Sigmoid colon (tissue), 7 donors: ENCODE measurements at regions of chr9 and their contacts with region 1.

Region 1: DNA sequence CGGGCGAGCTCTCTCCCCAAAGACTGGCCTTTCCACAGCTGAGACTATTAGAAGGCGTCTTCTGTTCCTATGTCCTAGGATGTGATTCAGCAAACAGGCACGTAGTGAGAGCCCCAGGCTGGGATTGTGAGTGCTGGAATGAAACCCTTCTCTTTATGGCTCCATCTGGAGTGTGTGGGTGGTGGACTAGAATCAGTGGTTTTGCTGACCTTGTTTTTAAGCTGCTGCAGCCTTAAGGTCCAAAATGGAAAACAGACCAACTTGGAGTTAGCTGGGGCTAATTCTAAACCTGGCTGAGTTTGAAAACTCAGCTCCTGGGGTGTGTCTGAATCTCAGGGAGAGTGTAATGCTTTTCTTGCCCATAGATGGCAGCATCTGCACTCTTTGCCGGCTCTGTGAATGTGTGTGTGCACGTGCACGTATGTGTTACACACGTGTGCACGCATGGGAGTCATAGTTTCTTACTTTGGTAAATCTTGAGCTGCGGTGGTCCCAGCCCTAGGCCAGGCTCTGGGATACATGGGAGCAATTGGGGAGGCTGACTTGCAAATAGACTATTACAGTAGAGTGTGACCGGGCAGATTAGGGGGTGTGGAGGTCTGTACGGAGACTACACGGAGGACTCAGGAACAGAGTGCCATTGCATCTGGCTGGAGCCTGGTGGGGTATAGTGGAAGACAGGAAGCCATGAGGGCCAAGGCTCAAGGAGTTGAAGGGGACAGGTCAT is 10.7 kb downstream of the GSN start:
- DNase-seq: peak; percentile 94
- H3K4me3 ChIP-seq: peak overlapping the region in 1 of 4 donors; percentile 7
- H3K27ac ChIP-seq: peak overlapping the region; percentile 94 to 99 (median 97)
- H3K4me1 ChIP-seq: peaks cover 0 to 100% (median 97%) of the 10 kb centered on the region in 4 donors
- H3K27me3 ChIP-seq: no peaks in the 10 kb centered on the region
- CTCF ChIP-seq: peak in 3 of 4 experiments; percentile 79 to 94 (median 83)
- EP300 ChIP-seq: peak in 2 of 4 donors; percentile 52 to 64
- POLR2A ChIP-seq: peak in 1 of 2 donors; percentile 34

Region 2: GRCh38 chr9:120362446-120362845 is 916.3 kb before region 1 on chr9:
- intact Hi-C with region 1: no loop called
- DNase-seq: no peak
- H3K4me3 ChIP-seq: no peak overlapping the region
- H3K27ac ChIP-seq: no peak overlapping the region
- H3K4me1 ChIP-seq: peaks cover 0 to 7% (median 0%) of the 10 kb centered on the region in 4 donors
- H3K27me3 ChIP-seq: no peaks in the 10 kb centered on the region
- CTCF ChIP-seq: no peak
- EP300 ChIP-seq: no peak
- POLR2A ChIP-seq: no peak

Region 3: DNA sequence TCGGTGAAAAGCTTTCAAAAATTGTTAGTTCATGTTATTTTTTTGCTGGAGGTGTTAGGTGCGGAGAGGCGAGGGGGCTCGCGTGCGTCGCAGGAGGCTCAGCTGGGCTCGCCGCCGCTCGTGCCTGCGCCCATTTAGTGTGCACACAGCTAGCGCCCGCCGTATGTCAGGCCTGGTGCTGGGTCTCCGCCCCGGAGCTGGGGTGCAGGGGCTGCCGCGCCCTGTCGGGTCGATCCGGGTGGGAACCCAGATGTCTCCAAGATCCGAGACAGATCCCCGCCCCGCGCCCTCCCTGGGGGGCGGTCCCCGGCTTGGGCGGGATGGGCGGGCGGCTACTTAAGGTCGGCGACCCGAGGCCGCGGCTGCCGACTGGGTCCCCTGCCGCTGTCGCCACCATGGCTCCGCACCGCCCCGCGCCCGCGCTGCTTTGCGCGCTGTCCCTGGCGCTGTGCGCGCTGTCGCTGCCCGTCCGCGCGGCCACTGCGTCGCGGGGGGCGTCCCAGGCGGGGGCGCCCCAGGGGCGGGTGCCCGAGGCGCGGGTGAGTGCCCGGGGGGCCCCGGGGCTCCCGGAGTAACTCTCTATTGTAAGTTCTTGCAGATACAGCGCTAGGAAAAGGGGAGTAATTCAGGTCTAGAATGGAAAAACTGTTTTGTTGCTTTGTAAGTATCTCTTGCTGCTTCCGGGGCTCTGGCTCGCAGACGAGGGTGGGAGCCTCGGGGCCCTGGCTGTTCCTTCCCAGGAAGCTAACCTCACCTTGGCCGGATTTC is 21.0 kb after region 1 on chr9:
- intact Hi-C with region 1: loop called (anchors 2 kb)
- DNase-seq: peak; percentile 93
- H3K4me3 ChIP-seq: peak overlapping the region; percentile 41 to 67 (median 62)
- H3K27ac ChIP-seq: peak overlapping the region; percentile 94 to 99 (median 97)
- H3K4me1 ChIP-seq: peaks cover 0 to 96% (median 94%) of the 10 kb centered on the region in 4 donors
- H3K27me3 ChIP-seq: no peaks in the 10 kb centered on the region
- CTCF ChIP-seq: no peak
- EP300 ChIP-seq: no peak
- POLR2A ChIP-seq: peak in 1 of 2 donors; percentile 37

Region 4: DNA sequence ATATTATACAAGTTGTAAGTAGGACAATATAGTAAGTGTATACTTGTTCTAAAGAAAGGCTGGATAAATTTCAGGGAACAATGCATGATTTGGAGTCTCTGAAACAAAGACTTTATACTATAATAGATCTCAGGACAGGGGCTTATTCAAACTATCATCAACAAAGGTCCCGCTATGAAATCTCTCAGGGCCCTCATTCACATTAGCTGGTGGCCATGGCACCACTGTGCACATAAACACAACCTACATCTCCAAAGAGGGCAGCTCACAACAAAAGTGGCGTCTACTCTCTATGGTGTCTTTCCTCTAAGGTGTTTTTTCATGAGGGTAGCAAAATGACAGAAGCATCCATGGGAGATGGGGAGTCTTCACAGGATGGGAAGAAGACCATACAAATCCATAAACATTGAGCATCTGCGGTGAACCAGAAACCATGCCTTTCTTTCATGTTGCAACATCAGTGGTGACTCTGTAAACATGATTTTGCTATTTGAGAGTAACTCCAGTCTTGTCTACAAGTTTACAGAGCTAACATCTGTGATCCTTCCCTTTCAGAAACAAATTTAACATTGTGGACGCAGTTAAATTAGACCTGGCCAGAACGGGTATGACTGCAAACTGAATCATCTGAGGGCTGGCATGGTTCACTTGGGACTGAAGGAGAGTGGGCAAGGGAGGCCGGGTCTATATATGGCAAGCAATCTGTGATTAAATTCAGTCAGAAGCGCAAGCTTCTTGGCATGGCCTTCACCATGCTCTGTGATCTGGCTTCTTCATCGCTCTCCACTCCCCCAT is 808.9 kb after region 1 on chr9:
- intact Hi-C with region 1: loop called (anchors 5 kb)
- DNase-seq: peak; percentile 79
- H3K4me3 ChIP-seq: no peak overlapping the region
- H3K27ac ChIP-seq: peak overlapping the region; percentile 54 to 92 (median 91)
- H3K4me1 ChIP-seq: peaks cover 0 to 99% (median 91%) of the 10 kb centered on the region in 4 donors
- H3K27me3 ChIP-seq: no peaks in the 10 kb centered on the region
- CTCF ChIP-seq: no peak
- EP300 ChIP-seq: peak in 1 of 4 donors; percentile 76
- POLR2A ChIP-seq: no peak